ENCODE measurements at regions of chr5 and their contacts with region 1.

Region 1: GRCh38 chr5:120430572-120430971 is 33.5 kb upstream of the PRR16 start:
- DNase-seq: no peak
- H3K4me3 ChIP-seq: no peak overlapping the region
- H3K27ac ChIP-seq: no peak overlapping the region
- H3K4me1 ChIP-seq: no peaks in the 10 kb centered on the region
- H3K27me3 ChIP-seq: no peaks in the 10 kb centered on the region
- CTCF ChIP-seq: no peak
- POLR2A ChIP-seq: no peak

Region 2: DNA sequence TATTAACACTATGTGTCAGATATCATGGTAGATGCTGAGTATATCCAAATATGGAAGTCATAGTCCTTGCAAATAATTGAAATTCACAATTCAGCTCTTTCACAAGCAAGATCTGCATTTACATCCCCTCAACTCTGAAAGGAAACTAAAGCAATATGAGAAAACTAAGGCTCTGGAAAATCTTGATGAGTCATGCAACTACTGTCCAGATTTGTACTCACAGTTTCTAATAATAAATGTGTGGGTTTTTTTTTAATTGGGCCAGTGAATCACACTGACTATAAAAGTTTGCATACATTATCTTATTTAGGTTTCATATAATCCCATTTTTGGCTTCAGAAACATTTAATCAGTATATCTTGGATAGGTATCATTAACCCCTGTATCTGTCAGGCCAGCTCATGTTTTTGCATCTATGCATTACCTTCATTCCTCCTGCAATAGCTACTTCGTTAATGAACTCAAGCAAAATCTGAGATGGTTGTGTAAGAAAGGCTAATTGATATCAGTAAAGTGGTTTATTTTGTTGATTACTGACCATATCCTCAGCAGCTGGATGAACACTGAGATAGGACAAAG is 25.2 kb before region 1 on chr5:
- intact Hi-C with region 1: loop called (anchors 2 kb)
- DNase-seq: no peak
- H3K4me3 ChIP-seq: no peak overlapping the region
- H3K27ac ChIP-seq: no peak overlapping the region
- H3K4me1 ChIP-seq: no peaks in the 10 kb centered on the region
- H3K27me3 ChIP-seq: no peaks in the 10 kb centered on the region
- CTCF ChIP-seq: no peak
- POLR2A ChIP-seq: no peak

Measured in breast epithelium (tissue), 4 donors.